Activated CD4-positive, alpha-beta T cell treated with anti-CD3 and anti-CD28 coated beads for 36 hours (primary cell): ENCODE measurements at regions of chr6 and their contacts with region 1.

Region 1: GRCh38 chr6:154276810-154277628 is 79.6 kb downstream of the IPCEF1 start:
- DNase-seq: no peak
- ATAC-seq: peak; percentile 78
- H3K4me3 Mint-ChIP-seq: peak overlapping the region; percentile 63
- H3K27ac Mint-ChIP-seq: peak overlapping the region; percentile 84
- H3K4me1 Mint-ChIP-seq: peaks cover 29% of the 10 kb centered on the region
- H3K27me3 Mint-ChIP-seq: no peaks in the 10 kb centered on the region

Region 2: DNA sequence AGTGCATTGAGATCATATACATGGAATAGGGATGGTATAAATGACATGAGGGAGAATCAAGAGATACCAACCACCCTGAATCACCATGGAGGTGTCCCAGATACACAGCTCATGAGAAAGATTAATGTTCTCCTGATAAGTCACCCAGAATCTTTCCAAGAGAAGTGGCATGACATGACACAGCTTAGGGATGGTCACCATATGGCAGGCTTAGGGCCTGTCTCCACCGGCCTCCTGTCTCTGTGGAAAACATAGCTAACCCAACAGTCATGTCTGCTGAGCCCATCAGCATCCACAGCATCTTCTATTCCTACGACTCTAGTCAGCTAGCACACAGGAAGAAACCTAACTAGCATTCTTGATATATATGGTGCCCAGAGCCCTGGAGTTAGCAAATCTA is 53.7 kb before region 1 on chr6:
- CTCF ChIA-PET with region 1: interaction called, 17 read pairs
- POLR2A ChIA-PET with region 1: interaction called, 4 read pairs
- intact Hi-C with region 1: no loop called
- DNase-seq: no peak
- ATAC-seq: peak; percentile 3
- H3K4me3 Mint-ChIP-seq: no peak overlapping the region
- H3K27ac Mint-ChIP-seq: peak overlapping the region; percentile 49
- H3K4me1 Mint-ChIP-seq: peaks cover 74% of the 10 kb centered on the region
- H3K27me3 Mint-ChIP-seq: no peaks in the 10 kb centered on the region

Region 3: GRCh38 chr6:154229786-154230185 is 47.2 kb before region 1 on chr6:
- CTCF ChIA-PET with region 1: interaction called, 17 read pairs
- POLR2A ChIA-PET with region 1: interaction called, 4 read pairs
- intact Hi-C with region 1: loop called in 1 of 2 experiments (anchors 1 kb)
- DNase-seq: peak; percentile 82
- ATAC-seq: peak; percentile 71
- H3K4me3 Mint-ChIP-seq: peak overlapping the region; percentile 58
- H3K27ac Mint-ChIP-seq: peak overlapping the region; percentile 92
- H3K4me1 Mint-ChIP-seq: peaks cover 83% of the 10 kb centered on the region
- H3K27me3 Mint-ChIP-seq: no peaks in the 10 kb centered on the region

Region 4: DNA sequence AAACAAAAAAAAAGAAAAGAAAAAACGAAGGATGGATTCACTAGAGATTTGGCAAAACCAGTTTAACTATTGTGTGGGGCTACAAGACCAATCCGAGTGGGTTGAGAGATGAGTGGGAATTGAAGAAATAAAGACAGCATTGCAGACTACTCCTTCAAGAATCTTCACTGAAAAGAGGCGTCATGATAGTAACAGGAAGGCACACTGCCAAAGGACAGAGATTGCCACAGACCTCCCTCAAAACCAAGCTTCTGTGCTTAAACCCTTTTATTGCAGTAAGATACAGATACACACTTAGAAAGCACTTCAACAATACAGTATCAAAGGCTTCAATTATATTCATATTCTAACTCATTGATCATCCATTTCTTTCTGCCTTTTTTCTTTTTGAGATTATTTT is 24.3 kb before region 1 on chr6:
- CTCF ChIA-PET with region 1: interaction called, 21 read pairs
- POLR2A ChIA-PET with region 1: no interaction called
- intact Hi-C with region 1: loop called (anchors 1 kb)
- DNase-seq: no peak
- ATAC-seq: no peak
- H3K4me3 Mint-ChIP-seq: no peak overlapping the region
- H3K27ac Mint-ChIP-seq: peak overlapping the region; percentile 21
- H3K4me1 Mint-ChIP-seq: peaks cover 65% of the 10 kb centered on the region
- H3K27me3 Mint-ChIP-seq: peaks cover 6% of the 10 kb centered on the region

Region 5: DNA sequence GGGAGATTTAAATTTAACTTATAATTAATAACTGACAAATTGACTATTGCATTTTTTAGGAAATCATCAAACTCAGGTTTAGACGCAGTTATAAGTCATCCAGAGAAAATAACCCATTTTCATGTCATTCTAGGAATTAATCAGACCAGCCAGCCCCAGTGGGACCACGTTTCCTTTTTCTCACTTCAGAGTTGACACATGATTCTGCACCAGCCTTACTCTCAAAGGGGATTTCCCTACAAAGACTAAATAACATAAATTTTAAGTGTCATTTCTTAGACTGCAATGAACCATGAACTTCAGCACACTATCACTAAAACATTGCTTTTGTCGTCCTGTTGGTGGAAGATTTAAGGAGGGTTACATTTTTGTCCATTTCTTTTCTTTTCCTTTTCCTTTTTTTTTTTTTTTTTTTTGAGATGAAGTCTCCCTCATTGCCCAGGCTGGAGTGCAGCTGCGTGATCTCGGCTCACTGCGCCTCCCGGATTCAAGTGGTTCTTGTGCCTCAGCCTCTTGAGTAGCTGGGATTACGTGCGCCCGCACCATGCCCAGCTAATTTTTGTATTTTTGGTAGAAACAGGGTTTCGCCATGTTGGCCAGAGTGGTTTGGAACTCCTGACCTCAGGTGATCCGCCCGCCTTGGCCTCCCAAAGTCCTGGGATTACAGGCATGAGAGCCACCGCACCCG is 76.0 kb after region 1 on chr6:
- CTCF ChIA-PET with region 1: interaction called, 4 read pairs
- POLR2A ChIA-PET with region 1: interaction called, 3 read pairs
- intact Hi-C with region 1: loop called in 1 of 2 experiments (anchors 1 kb)
- DNase-seq: peak; percentile 78
- ATAC-seq: peak; percentile 85
- H3K4me3 Mint-ChIP-seq: no peak overlapping the region
- H3K27ac Mint-ChIP-seq: no peak overlapping the region
- H3K4me1 Mint-ChIP-seq: peaks cover 29% of the 10 kb centered on the region
- H3K27me3 Mint-ChIP-seq: peaks cover 35% of the 10 kb centered on the region

Region 6: GRCh38 chr6:154410619-154411072 is 133.6 kb after region 1 on chr6:
- CTCF ChIA-PET with region 1: no interaction called
- POLR2A ChIA-PET with region 1: no interaction called
- intact Hi-C with region 1: loop called in 1 of 2 experiments (anchors 1 kb)
- DNase-seq: peak; percentile 76
- ATAC-seq: peak; percentile 98
- H3K4me3 Mint-ChIP-seq: no peak overlapping the region
- H3K27ac Mint-ChIP-seq: peak overlapping the region; percentile 49
- H3K4me1 Mint-ChIP-seq: peaks cover 11% of the 10 kb centered on the region
- H3K27me3 Mint-ChIP-seq: peaks cover 14% of the 10 kb centered on the region

Region 7: DNA sequence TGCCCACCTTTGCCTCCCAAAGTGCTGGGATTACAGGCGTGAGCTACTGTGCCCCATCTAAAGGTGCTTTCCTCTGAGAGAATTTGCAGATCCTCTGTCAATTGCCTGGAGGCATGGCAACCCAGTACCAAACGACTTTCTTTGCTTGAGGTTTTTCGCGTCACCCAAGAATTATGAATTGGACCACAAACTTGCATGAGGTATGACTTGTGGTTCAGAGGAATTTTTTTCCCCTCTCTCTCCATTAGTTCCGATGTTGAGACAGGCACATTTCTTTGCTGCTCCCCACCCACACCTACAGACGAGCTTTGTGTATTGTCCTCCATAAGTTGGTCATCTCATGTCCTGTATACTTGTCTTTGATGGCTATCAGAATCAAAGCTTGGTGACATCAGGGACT is 444.4 kb after region 1 on chr6:
- CTCF ChIA-PET with region 1: no interaction called
- POLR2A ChIA-PET with region 1: no interaction called
- intact Hi-C with region 1: no loop called
- DNase-seq: no peak
- ATAC-seq: peak; percentile 23
- H3K4me3 Mint-ChIP-seq: no peak overlapping the region
- H3K27ac Mint-ChIP-seq: no peak overlapping the region
- H3K4me1 Mint-ChIP-seq: no peaks in the 10 kb centered on the region
- H3K27me3 Mint-ChIP-seq: peaks cover 13% of the 10 kb centered on the region